ENCODE measurements at regions of chr1 and their contacts with region 1.

Region 1: DNA sequence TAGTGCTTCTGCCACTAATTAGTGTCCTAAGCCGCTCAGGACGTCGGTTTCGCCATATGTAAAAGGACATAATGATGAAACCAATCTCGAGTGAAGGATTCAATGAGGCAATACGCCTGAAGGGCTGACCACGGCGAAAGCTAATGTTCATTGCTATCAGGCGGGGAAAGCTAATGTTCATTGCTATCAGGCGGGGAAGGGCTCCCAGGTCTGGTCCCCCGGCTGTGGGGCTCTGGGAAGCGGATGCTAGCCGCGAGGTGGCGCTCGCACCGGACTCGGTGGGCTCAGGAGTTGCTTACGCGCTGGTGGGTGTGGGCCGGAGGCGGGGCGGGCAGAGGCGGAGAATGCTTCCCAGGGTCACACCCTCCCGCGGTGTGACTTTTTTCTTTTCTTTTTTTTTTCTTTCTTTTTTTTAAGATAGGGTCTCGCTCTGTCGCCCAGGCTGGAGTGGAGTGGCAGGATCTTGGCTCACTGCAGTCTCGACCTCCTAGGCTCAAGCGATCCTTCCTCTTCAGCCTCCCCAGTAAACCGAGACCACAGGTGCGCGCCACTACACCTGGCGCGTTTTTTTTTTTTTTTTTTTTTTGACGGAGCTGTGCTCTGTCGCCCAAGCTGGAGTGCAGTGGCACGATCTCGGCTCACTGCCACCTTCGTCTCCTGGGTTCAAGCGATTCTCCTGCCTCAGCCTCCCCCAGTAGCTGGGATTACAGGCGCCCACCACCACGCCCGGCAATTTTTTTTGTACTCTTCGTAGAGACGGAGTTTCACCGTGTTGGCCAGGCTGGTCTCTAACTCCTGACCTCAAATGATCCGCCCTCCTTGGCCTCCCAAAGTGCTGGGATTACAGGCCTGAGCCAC is 1.1 kb upstream of the PEAR1 start:
- DNase-seq: peak; percentile 96
- ATAC-seq: peak; percentile 85 to 88

Region 2: GRCh38 chr1:156689035-156689952 is 203.1 kb before region 1 on chr1:
- intact Hi-C with region 1: loop called in 1 of 2 experiments (anchors 1 kb)
- DNase-seq: peak; percentile 80
- ATAC-seq: peak; percentile 92 to 96

Region 3: GRCh38 chr1:156728597-156729462 is 163.6 kb before region 1 on chr1 and contains the start of gene ISG20L2:
- intact Hi-C with region 1: loop called in 1 of 2 experiments (anchors 2 kb)
- DNase-seq: peak; percentile 98
- ATAC-seq: peak; percentile 96 to 97
- total RNA-seq, gene ISG20L2: 15.7 to 18.6 TPM

Region 4: GRCh38 chr1:156838981-156839410 is 53.4 kb before region 1 on chr1:
- intact Hi-C with region 1: loop called in 1 of 2 experiments (anchors 5 kb)
- DNase-seq: no peak
- ATAC-seq: peak; percentile 34 to 46

Region 5: DNA sequence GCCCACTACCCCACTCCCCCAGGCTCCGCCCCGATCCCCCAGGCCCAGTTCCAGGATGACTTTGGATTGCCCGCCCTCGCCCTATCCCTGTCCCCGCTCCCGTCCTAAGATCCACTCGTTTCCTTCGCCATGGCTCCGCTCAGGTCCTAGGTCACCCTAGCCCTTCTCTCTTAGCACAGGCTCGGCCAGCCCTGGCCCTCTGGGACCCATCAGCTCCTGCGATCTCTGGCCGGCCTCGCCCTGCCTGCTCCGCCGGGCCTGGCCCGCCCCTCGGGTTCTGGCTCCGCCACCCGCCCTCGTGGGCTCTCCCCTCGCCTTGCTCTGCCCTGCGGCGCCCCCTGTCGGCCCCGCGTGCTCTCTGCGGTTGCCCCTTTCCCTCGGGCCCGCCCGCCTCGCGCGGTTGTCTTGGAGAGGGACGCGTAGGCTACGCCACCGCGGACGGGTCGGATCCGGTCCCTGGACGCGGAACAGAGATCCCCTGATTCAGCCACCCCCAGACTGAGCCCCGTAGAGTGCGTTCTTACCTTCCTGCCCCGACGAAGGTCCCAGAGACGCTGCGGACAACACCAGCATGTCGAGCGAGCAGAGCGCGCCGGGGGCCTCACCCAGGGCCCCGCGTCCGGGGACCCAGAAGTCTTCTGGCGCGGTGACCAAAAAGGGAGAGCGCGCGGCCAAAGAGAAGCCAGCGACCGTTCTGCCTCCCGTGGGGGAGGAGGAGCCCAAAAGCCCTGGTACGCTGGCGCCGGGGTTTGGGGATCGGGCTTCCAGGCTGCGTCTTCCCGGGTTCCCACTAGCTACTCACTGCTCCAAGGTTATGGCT is 28.0 kb after region 1 on chr1 and contains the start of gene LRRC71:
- intact Hi-C with region 1: loop called (anchors 2 to 5 kb)
- DNase-seq: peak; percentile 85
- ATAC-seq: peak; percentile 90 to 95
- total RNA-seq, gene LRRC71: not detected

Region 6: GRCh38 chr1:156927215-156928042 is 35.0 kb after region 1 on chr1:
- intact Hi-C with region 1: loop called in 1 of 2 experiments (anchors 5 kb)
- DNase-seq: peak; percentile 80
- ATAC-seq: peak; percentile 67 to 71

Region 7: DNA sequence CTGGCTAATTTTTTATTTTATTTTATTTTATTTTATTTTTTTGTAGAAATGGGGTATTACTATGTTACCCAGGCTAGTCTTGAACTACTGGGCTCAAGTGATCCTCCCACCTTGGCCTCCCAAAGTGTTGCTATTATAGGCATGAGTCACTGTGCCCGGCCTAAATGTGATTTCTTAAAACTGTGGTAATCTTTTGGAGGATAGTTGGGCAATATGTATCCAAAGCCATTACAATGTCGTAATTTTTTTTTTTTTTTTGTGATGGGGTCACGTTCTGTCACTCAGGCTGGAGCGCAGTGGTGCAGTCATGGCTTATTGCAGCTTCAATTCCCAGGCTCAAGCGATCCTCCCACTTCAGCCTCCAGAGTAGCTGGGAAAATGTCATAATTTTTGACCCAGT is 193.0 kb after region 1 on chr1:
- intact Hi-C with region 1: no loop called
- DNase-seq: no peak
- ATAC-seq: no peak